Thyroid gland (tissue), 4 donors: ENCODE measurements at regions of chr21 and their contacts with region 1.

Region 1: DNA sequence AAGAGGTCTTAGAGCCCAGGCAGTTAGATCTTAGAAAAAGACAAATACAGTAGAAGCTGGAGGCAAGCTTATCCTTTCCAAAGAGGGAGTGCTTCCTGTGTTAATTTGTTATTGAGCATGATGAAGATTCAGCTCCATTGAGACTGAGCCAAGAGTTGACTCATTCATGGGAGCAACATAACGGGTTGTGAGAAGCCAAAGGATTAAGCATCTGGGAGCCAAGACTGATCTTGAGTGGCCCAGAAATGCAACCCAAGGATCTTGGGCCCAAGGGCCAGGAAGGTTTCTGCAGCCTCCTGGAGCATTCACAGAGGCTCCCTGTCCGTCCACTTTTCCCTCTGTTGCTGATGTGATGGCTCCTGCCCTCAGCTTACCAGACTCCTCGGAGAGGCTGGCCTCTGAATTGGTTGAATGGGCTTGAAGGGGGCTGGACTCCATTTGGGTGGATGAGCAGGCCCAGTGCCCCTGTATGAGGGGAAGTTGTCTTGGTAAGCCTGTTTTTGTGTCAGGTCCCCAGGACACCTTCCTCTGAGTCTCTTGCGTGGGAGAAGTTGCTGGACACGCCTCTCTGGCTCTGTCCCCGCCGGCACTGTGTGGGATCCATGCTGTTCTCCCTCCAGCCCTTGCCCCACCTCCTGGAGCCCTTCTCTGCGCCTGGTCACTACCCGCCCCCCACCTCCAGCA is 42.4 kb downstream of the PDE9A start:
- DNase-seq: no peak
- H3K4me3 ChIP-seq: no peak overlapping the region
- H3K27ac ChIP-seq: no peak overlapping the region
- H3K4me1 ChIP-seq: no peaks in the 10 kb centered on the region
- H3K27me3 ChIP-seq: no peaks in the 10 kb centered on the region
- CTCF ChIP-seq: no peak
- POLR2A ChIP-seq: no peak

Region 2: DNA sequence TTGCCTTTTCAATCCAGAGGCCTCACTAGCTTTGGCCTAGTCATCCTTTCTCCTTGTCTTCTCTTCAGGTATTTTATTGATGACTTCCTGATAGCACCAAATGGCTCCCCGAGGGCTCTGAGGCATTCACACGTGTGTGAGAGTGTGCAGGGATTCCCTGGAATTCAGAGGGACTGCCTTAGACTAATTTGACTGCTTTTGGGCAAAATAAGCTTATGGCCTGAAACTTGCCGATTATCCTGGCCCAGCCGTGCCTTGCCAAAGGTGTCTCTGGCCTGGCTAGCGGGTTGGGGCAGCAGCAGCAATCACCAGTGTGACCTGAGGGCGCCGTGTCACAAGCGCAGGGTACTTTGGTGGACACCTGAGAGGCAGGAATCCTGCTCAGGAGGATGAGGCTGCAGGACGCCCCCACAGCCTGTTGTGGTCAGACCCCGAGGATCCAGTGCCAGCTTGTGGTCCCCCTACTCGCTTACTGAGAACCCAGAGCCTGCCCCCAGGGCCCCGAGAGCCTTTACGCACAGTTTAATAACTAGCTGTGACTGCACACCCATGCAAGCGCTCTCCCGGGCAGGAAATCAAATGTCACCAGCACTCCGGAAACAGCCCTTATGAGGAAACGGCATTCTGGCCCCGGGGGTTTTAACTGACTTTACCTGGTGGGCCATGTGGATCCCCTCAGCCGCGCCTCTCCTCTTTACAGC is 105.3 kb before region 1 on chr21:
- intact Hi-C with region 1: no loop called
- DNase-seq: no peak
- H3K4me3 ChIP-seq: no peak overlapping the region
- H3K27ac ChIP-seq: no peak overlapping the region
- H3K4me1 ChIP-seq: peaks cover 5 to 8% of the 10 kb centered on the region in 2 donors
- H3K27me3 ChIP-seq: no peaks in the 10 kb centered on the region
- CTCF ChIP-seq: no peak
- POLR2A ChIP-seq: no peak

Region 3: DNA sequence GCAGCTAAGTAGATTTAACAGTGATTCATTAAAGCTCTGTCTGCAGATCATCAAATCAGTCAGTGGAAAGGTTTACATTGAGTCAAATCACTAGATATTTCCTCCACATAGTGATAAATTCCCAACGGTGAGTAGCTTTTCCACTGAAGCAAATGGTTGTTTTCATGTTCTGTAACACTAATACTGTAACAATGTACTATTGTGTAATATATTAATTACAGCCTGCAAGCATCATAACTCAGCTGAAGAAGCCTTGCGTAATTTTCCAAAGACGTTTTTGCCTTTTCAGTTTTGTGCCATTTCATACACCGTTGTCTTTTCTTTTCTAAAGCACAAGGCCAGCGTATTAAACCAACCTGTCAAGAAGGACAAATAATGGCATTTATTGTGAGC is 59.3 kb before region 1 on chr21:
- intact Hi-C with region 1: loop called (anchors 10 kb)
- DNase-seq: no peak
- H3K4me3 ChIP-seq: no peak overlapping the region
- H3K27ac ChIP-seq: no peak overlapping the region
- H3K4me1 ChIP-seq: peaks cover 9 to 13% of the 10 kb centered on the region in 2 donors
- H3K27me3 ChIP-seq: no peaks in the 10 kb centered on the region
- CTCF ChIP-seq: no peak
- POLR2A ChIP-seq: no peak